SK-N-SH (cell line): ENCODE measurements at regions of chr20 and their contacts with region 1.

Region 1: GRCh38 chr20:63973636-63974402 is 4.1 kb upstream of the ZNF512B start:
- DNase-seq: peak; percentile 95
- H3K4me3 ChIP-seq: peak overlapping the region; percentile 7 to 12; a peak in 2 of 4 replicates
- H3K27ac ChIP-seq: no peak overlapping the region
- H3K4me1 ChIP-seq: peaks cover 5 to 17% of the 10 kb centered on the region in 2 experiments; a peak in 3 of 4 replicates
- H3K27me3 ChIP-seq: no peaks in the 10 kb centered on the region
- CTCF ChIP-seq: peak; percentile 98
- EP300 ChIP-seq: no peak
- RAD21 ChIP-seq: peak; percentile 91

Region 2: DNA sequence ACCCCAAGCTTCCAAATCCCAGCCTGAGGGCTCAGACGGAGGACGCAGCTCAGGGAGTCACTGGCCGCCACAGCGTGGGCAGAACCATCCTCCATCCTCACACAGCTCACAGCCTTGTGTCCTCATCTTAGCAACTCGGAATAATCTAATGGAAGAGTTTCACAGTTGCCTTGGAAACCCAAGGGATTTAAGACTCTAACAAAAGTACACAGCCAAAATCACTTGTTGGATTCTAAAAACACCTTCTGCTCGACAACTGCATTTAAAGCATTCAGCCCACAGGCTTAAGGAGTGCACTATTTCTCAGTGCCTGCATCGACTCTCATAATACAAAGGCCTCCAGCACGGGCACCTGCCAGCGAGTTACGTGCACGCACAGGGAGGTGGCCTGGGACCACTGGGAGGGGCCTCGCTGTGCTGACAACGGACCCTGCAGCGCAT is 188.1 kb before region 1 on chr20:
- CTCF ChIA-PET with region 1: interaction called, 11 read pairs
- POLR2A ChIA-PET with region 1: no interaction called
- DNase-seq: no peak
- H3K4me3 ChIP-seq: no peak overlapping the region
- H3K27ac ChIP-seq: no peak overlapping the region
- H3K4me1 ChIP-seq: no peaks in the 10 kb centered on the region
- H3K27me3 ChIP-seq: no peaks in the 10 kb centered on the region
- CTCF ChIP-seq: no peak
- EP300 ChIP-seq: no peak
- RAD21 ChIP-seq: no peak

Region 3: DNA sequence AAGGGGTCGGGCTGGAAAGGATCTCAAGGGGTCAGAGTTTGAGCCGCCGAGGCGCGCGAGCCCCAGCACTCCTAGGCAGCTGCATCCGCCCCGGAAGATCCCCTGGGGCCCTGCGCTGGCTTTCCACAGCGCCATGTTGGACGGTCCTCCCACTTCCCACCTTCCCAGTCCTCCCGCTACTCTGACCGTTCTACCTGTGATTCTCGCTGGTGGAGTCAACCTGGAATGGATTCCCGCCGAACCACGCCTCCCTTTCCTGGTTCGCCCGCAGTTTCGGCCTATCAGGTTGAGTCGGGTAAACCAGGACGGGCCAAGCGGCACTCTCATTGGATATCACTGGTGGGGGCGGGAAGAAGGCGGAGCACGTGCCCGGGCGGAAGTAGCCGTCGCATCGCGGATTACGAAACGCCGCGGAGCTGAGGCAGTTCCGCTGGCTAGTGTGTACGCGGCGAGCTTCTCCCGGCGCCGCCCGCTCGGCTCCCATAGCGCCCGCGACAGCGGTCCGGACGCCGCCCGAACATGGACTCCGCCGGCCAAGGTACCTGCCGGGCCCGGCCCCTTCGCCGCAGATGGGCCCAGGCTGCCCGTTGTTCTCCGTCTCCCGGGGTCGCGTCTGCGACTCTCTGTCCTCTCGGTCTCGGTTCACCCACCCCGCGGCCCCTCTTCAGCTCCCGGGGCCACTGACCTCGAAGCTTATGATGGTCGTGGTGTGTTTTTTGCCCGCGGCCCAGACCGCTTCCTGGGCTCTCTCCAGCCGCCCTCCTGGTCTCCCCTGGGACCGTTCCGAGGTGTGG is 108.8 kb before region 1 on chr20 and contains the start of gene TPD52L2:
- CTCF ChIA-PET with region 1: interaction called, 11 read pairs
- POLR2A ChIA-PET with region 1: no interaction called
- DNase-seq: peak; percentile 98
- H3K4me3 ChIP-seq: peak within 1 kb of the TSS; percentile 78 to 97
- H3K27ac ChIP-seq: peak within 1 kb of the TSS; percentile 78 to 84
- H3K4me1 ChIP-seq: peaks cover 0 to 11% of the 10 kb centered on the region in 2 experiments; a peak in 1 of 4 replicates
- H3K27me3 ChIP-seq: no peaks in the 10 kb centered on the region
- CTCF ChIP-seq: no peak
- EP300 ChIP-seq: no peak
- RAD21 ChIP-seq: no peak
- polyA plus RNA-seq, gene TPD52L2: 137 and 161 TPM in 2 replicates

Region 4: DNA sequence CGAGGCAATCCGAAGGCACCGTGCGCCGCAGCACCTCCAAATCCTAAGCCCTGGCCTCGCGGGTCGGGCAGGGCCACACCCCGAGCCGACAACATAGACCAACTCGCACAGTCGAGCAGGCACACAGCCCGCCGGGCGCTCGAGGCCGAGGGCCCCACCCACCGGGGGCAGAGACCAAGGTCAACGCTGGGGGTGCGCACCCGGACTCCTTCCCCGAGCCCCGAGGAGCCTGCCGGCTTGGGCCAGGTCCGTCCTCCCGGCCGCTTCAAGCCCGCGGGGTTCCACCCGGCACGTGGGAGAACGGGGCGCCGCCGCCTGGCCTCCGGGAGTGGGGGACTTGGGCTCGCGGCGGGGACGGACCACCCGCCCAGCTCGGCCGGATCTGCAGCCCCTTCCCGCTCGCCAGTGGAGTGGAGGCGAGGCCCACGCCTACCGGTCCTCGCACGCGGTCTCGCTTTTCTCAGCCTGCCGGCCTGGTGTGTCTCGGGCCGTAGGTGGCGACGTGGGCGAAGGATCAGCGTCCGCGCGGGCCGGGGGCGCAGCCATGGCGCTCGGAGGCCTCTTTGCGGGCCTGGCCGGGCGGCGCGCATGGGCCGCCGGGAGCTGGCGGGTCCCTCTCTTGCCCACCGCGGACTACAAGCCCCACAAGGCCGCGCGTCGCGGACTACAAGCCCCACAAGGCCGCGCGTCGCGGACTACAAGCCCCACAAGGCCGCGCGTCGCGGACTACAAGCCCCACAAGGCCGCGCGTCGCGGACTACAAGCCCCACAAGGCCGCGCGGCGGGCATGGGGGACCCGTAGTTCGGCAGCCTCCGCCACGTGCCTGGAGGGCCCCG is 17.8 kb before region 1 on chr20 and contains the start of gene UCKL1:
- CTCF ChIA-PET with region 1: interaction called, 32 read pairs
- POLR2A ChIA-PET with region 1: interaction called, 4 read pairs
- DNase-seq: peak; percentile 95
- H3K4me3 ChIP-seq: peak within 1 kb of the TSS; percentile 91 to 98
- H3K27ac ChIP-seq: peak within 1 kb of the TSS; percentile 72 to 88
- H3K4me1 ChIP-seq: peaks cover 6 to 33% of the 10 kb centered on the region in 2 experiments; a peak in 1 of 4 replicates
- H3K27me3 ChIP-seq: no peaks in the 10 kb centered on the region
- CTCF ChIP-seq: no peak; the same call in 1 of the 2 replicates
- EP300 ChIP-seq: no peak
- RAD21 ChIP-seq: no peak
- polyA plus RNA-seq, gene UCKL1: 70.3 and 71.6 TPM in 2 replicates

Region 5: GRCh38 chr20:63962426-63963347 is 11.1 kb before region 1 on chr20:
- CTCF ChIA-PET with region 1: interaction called, 32 read pairs
- POLR2A ChIA-PET with region 1: interaction called, 4 read pairs
- DNase-seq: no peak
- H3K4me3 ChIP-seq: no peak overlapping the region
- H3K27ac ChIP-seq: no peak overlapping the region
- H3K4me1 ChIP-seq: peaks cover 0 to 5% of the 10 kb centered on the region in 2 experiments; a peak in 1 of 4 replicates
- H3K27me3 ChIP-seq: no peaks in the 10 kb centered on the region
- CTCF ChIP-seq: no peak
- EP300 ChIP-seq: no peak
- RAD21 ChIP-seq: no peak

Region 6: DNA sequence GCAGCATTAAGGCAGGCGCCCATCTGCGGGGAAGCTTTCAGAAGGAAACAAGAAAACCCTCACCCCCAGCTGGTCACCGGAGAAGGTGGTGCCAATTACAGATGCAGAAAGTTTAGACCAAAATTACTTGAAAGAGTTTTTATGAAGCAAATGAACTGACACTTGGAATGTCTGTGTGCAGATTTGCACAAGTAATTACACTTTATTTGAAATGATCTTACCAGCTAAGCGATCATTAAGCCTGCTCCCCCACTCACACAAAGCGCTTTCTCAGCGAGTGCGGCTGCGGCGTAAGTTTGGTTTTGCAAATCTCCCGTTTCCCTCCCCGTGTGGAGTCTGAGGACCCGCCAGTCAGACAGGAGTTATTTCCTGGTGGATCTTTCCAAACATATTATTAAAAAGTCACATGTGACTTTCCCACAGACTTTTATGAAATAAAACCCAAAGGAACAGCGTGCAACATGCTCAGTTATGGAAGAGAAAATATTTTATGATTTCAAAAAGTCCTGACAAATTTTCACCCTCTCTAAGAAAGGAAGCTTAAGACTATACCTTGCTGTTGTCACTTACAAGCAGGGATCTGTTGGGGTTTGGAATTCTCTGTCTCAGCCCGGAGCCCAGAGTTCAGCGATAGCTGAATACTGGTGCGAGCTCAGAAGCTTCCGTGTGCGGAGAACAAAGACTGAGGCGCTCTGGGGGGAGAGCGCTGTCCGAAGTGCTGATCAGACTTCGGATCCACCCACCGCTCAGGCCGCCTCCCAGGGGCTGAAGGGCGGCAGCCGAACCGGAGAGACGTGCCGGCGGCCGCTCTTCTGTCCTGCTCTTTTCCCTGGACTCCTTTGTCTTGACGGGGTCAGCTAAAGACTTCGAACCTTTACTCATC is 187.8 kb after region 1 on chr20:
- CTCF ChIA-PET with region 1: no interaction called
- POLR2A ChIA-PET with region 1: no interaction called
- DNase-seq: no peak
- H3K4me3 ChIP-seq: no peak overlapping the region
- H3K27ac ChIP-seq: no peak overlapping the region
- H3K4me1 ChIP-seq: peaks cover 0 to 48% of the 10 kb centered on the region in 2 experiments; a peak in 2 of 4 replicates
- H3K27me3 ChIP-seq: peaks cover 28% of the 10 kb centered on the region
- CTCF ChIP-seq: no peak
- EP300 ChIP-seq: no peak
- RAD21 ChIP-seq: no peak